ENCODE measurements at regions of chr17 and their contacts with region 1.

Region 1: GRCh38 chr17:49170216-49170615 is 37.6 kb downstream of the B4GALNT2 start:
- DNase-seq: no peak
- ATAC-seq: no peak
- H3K4me3 ChIP-seq: no peak overlapping the region
- H3K27ac ChIP-seq: no peak overlapping the region
- H3K4me1 ChIP-seq: no peaks in the 10 kb centered on the region
- CTCF ChIP-seq: no peak
- EP300 ChIP-seq: no peak
- POLR2A ChIP-seq: no peak
- RAD21 ChIP-seq: no peak

Region 2: DNA sequence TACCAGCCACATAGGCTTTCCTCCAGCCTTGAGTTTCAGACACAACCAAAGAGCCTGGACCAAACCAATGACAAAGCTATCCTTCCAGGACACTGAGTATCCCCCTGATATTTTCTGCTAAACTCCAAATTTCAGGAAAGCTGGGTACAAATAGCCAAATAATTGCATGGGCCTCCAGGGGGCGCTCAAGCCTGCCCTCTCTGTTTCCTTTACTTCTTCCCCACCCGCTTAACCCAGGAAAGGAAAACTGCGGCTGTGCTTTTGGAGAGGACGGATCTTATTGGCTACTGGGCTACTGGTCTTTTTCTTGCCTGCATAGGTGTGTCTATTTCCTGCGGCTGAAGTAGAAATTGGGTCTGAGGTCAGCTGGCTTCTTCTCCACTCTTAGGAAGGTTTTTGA is 10.1 kb after region 1 on chr17:
- CTCF ChIA-PET with region 1: interaction called, 31 read pairs
- POLR2A ChIA-PET with region 1: no interaction called
- DNase-seq: peak; percentile 69 to 79
- ATAC-seq: peak; percentile 62 to 87
- H3K4me3 ChIP-seq: no peak overlapping the region
- H3K27ac ChIP-seq: no peak overlapping the region
- H3K4me1 ChIP-seq: no peaks in the 10 kb centered on the region
- CTCF ChIP-seq: peak; percentile 85
- EP300 ChIP-seq: no peak
- POLR2A ChIP-seq: no peak
- RAD21 ChIP-seq: peak; percentile 72 to 75

Measured in A549 (cell line).